CD8-positive, alpha-beta T cell (primary cell): ENCODE measurements at regions of chrX and their contacts with region 1.

Region 1: GRCh38 chrX:78092296-78092695 is 11.8 kb upstream of the PGK1 start:
- DNase-seq: peak in 5 of 9 experiments; percentile 14 to 47 (median 24)
- ATAC-seq: peak; percentile 75
- H3K4me3 ChIP-seq: no peak overlapping the region
- H3K4me3 Mint-ChIP-seq: no peak overlapping the region
- H3K27ac ChIP-seq: no peak overlapping the region
- H3K27ac Mint-ChIP-seq: no peak overlapping the region
- H3K4me1 ChIP-seq: no peaks in the 10 kb centered on the region
- H3K4me1 Mint-ChIP-seq: peaks cover 4% of the 10 kb centered on the region
- H3K27me3 ChIP-seq: no peaks in the 10 kb centered on the region
- H3K27me3 Mint-ChIP-seq: no peaks in the 10 kb centered on the region
- CTCF ChIP-seq: peak; percentile 36

Region 2: GRCh38 chrX:78024349-78025108 is 67.8 kb before region 1 on chrX:
- CTCF ChIA-PET with region 1: interaction called, 4 read pairs
- POLR2A ChIA-PET with region 1: no interaction called
- intact Hi-C with region 1: loop called in 1 of 2 experiments (anchors 5 kb)
- DNase-seq: peak in 6 of 9 experiments; percentile 11 to 67 (median 43)
- ATAC-seq: peak; percentile 88
- H3K4me3 ChIP-seq: no peak overlapping the region
- H3K4me3 Mint-ChIP-seq: no peak overlapping the region
- H3K27ac ChIP-seq: no peak overlapping the region
- H3K27ac Mint-ChIP-seq: no peak overlapping the region
- H3K4me1 ChIP-seq: no peaks in the 10 kb centered on the region
- H3K4me1 Mint-ChIP-seq: peaks cover 5% of the 10 kb centered on the region
- H3K27me3 ChIP-seq: no peaks in the 10 kb centered on the region
- H3K27me3 Mint-ChIP-seq: no peaks in the 10 kb centered on the region
- CTCF ChIP-seq: peak; percentile 47

Region 3: DNA sequence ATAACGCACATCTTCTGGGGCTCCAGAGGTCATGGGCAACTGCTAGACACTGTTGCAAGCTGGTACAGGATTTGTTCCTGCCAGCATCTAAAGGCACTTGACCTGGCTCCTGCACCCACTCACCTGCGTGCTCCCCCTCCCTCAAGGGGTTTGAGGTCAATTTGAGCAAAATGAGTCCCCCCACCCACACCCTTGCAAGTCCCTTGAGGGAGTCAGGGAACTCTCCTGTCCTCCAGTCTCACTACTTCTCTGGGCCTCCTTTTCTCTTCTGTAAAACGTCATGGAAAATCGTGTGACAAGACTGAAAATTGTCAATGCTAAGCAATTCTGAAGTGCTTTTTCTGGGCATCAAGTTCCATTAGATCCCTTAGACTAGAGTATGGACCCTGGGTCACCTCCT is 28.1 kb before region 1 on chrX:
- CTCF ChIA-PET with region 1: no interaction called
- POLR2A ChIA-PET with region 1: no interaction called
- intact Hi-C with region 1: loop called in 1 of 2 experiments (anchors 5 kb)
- DNase-seq: no peak
- ATAC-seq: no peak
- H3K4me3 ChIP-seq: no peak overlapping the region
- H3K4me3 Mint-ChIP-seq: no peak overlapping the region
- H3K27ac ChIP-seq: no peak overlapping the region
- H3K27ac Mint-ChIP-seq: no peak overlapping the region
- H3K4me1 ChIP-seq: no peaks in the 10 kb centered on the region
- H3K4me1 Mint-ChIP-seq: peaks cover 2% of the 10 kb centered on the region
- H3K27me3 ChIP-seq: no peaks in the 10 kb centered on the region
- H3K27me3 Mint-ChIP-seq: no peaks in the 10 kb centered on the region
- CTCF ChIP-seq: no peak

Region 4: DNA sequence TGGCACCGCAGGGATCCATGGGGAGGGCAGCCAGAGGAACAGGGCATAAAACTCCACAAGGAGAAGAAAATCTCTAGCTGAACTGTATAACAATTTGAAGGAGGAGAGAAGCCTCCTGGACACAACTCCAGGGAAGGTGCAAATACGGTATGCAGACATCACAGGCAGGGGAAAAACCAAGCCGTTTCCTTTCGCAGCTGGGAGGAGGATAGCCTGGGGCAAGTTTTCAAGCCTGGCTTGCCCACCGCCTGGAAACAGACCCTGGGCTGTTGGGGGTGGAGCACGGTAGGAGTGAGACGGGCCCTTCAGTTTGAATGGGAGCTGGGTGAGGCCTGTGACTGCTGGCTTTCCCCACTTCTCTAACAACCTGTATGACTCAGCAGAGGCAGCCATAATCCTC is 90.6 kb after region 1 on chrX:
- CTCF ChIA-PET with region 1: no interaction called
- POLR2A ChIA-PET with region 1: no interaction called
- intact Hi-C with region 1: no loop called
- DNase-seq: no peak
- ATAC-seq: no peak
- H3K4me3 ChIP-seq: no peak overlapping the region
- H3K4me3 Mint-ChIP-seq: no peak overlapping the region
- H3K27ac ChIP-seq: no peak overlapping the region
- H3K27ac Mint-ChIP-seq: no peak overlapping the region
- H3K4me1 ChIP-seq: no peaks in the 10 kb centered on the region
- H3K4me1 Mint-ChIP-seq: no peaks in the 10 kb centered on the region
- H3K27me3 ChIP-seq: no peaks in the 10 kb centered on the region
- H3K27me3 Mint-ChIP-seq: no peaks in the 10 kb centered on the region
- CTCF ChIP-seq: no peak

Region 5: DNA sequence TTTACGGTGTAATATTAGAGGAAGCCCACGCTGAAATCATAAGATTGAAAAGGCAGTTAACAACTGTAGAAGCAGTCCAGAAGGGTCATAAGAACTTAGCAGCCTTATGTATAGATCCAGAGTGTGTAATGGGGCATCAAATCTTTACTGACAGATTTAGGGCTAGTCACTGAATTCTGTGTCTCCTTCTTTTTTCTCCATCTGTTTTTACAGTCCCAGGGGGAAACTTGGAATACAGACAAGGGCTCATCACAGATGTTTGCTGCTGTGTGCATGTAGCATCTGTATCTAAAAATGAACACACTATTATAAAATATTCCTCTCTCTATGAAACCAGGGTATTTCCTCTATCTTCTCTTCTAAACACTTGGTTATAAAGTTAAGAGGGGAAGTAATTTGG is 191.2 kb after region 1 on chrX:
- CTCF ChIA-PET with region 1: no interaction called
- POLR2A ChIA-PET with region 1: no interaction called
- intact Hi-C with region 1: no loop called
- DNase-seq: no peak
- ATAC-seq: no peak
- H3K4me3 ChIP-seq: no peak overlapping the region
- H3K4me3 Mint-ChIP-seq: no peak overlapping the region
- H3K27ac ChIP-seq: no peak overlapping the region
- H3K27ac Mint-ChIP-seq: no peak overlapping the region
- H3K4me1 ChIP-seq: no peaks in the 10 kb centered on the region
- H3K4me1 Mint-ChIP-seq: no peaks in the 10 kb centered on the region
- H3K27me3 ChIP-seq: no peaks in the 10 kb centered on the region
- H3K27me3 Mint-ChIP-seq: no peaks in the 10 kb centered on the region
- CTCF ChIP-seq: no peak